B cell (primary cell): ENCODE measurements at regions of chr16 and their contacts with region 1.

Region 1: DNA sequence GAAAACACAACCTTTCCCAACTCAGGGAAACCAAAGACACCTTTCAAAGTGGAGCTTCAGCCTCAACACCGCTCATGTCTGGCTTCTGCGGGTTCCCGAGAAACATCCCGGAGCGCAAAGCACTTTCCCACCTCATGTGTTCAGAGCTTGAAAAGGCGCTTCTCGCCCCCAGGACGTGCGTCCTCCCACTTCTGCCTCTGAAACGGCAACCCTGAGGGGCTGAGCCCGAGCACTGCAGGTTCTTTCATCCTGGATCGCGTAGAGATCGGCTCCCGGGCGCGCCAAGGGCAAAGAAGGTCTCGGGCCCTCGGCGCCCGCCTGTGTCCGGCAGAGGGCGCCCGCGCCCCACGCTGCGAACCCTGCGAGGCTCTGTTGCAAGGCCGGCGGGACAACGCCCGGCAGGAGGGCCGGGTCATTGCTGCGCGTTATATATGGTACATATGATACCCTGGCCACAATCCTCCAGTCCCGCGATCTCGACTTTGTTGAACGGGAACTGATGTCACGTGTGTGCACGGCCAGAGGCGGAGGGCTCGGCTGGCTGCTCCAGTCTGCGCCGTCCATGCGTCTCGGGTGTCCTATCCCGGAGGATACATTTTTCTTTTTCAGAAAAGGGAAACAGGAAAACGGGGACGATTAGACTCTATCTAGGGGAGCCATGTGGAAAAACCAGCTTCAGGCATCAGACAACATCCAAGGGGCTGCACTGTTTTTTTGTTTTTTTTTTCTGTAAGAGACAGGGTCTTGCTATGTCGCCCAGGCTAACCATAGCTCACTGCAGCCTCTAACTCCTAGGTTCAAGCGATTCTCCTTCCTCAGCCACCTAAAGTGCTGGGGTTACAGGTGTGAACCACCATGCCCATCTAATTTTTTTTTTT is 19.1 kb downstream of the COQ7 start:
- DNase-seq: peak; percentile 87
- ATAC-seq: peak; percentile 97
- H3K4me3 ChIP-seq: peak overlapping the region in 4 of 5 experiments; percentile 21 to 58 (median 38)
- H3K4me3 Mint-ChIP-seq: peak overlapping the region; percentile 79
- H3K27ac ChIP-seq: no peak overlapping the region
- H3K27ac Mint-ChIP-seq: no peak overlapping the region
- H3K4me1 ChIP-seq: peaks cover 7 to 10% of the 10 kb centered on the region in 2 donors
- H3K4me1 Mint-ChIP-seq: peaks cover 5% of the 10 kb centered on the region
- H3K27me3 ChIP-seq: peaks cover 0 to 13% (median 8%) of the 10 kb centered on the region in 4 experiments
- H3K27me3 Mint-ChIP-seq: peaks cover 4% of the 10 kb centered on the region
- CTCF ChIP-seq: peak; percentile 100

Region 2: DNA sequence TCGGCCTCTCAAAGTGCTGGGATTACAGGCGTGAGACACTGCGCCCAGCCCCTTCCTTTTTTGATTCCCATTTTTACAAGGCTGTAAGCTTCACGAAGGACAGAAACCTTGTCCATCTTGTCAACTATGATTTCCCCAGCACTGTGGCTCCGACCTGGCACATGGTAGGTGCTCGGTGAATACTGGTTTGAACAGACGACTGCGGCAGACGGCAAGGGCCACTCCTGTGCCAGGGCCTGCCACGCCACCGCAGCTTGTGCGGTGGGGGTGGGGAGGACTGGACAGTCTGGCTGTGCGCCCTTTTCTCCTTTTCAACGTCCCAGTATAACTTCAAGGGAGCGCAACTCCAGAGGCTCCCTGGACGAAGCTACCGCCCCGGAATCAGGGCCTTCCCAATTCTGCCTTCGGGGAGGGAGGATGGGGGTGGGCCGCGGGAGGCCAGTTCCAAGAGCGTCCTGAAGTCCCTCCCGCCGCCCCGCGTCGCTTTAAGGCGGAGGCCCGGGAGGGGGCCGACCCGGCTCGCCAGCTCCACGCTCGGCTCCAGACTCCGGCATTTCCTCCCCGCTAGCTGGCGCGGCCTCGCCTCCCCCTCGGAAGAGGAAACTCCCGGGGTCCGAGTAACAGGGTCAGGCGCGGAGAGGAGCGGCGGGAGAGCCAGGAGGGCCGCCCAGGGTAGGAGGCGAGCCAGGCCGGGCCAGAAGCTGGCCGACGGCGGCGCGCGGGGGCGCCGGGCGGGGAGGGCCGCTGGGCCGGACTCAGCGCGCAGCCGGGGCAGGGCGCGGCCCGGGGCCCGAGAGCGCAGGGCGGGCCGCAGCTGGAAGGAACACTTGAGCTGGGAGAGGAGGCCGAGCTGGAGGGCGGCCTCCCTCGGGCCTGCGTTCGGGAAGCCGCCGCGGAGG is 27.1 kb after region 1 on chr16 and contains the start of gene ITPRIPL2:
- CTCF ChIA-PET with region 1: interaction called, 15 read pairs
- POLR2A ChIA-PET with region 1: no interaction called
- intact Hi-C with region 1: no loop called
- DNase-seq: peak; percentile 54
- ATAC-seq: peak; percentile 41
- H3K4me3 ChIP-seq: peak within 1 kb of the TSS in 4 of 5 experiments; percentile 28 to 53 (median 43)
- H3K4me3 Mint-ChIP-seq: peak within 1 kb of the TSS; percentile 86
- H3K27ac ChIP-seq: no peak within 1 kb of the TSS
- H3K27ac Mint-ChIP-seq: peak within 1 kb of the TSS; percentile 84
- H3K4me1 ChIP-seq: peaks cover 20 to 30% of the 10 kb centered on the region in 2 donors
- H3K4me1 Mint-ChIP-seq: peaks cover 38% of the 10 kb centered on the region
- H3K27me3 ChIP-seq: peaks cover 0 to 12% (median 0%) of the 10 kb centered on the region in 4 experiments
- H3K27me3 Mint-ChIP-seq: peaks cover 13% of the 10 kb centered on the region
- CTCF ChIP-seq: no peak
- total RNA-seq, gene ITPRIPL2: 14.6 and 15.4 TPM in 2 replicates

Region 3: GRCh38 chr16:19167710-19168370 is 81.3 kb after region 1 on chr16 and contains the start of gene SYT17:
- CTCF ChIA-PET with region 1: interaction called, 4 read pairs
- POLR2A ChIA-PET with region 1: no interaction called
- intact Hi-C with region 1: loop called (anchors 1 kb)
- DNase-seq: peak; percentile 85
- ATAC-seq: peak; percentile 88
- H3K4me3 ChIP-seq: peak within 1 kb of the TSS in 4 of 5 experiments; percentile 50 to 69 (median 59)
- H3K4me3 Mint-ChIP-seq: peak within 1 kb of the TSS; percentile 85
- H3K27ac ChIP-seq: peak within 1 kb of the TSS in 1 of 2 donors; percentile 3
- H3K27ac Mint-ChIP-seq: peak within 1 kb of the TSS; percentile 81
- H3K4me1 ChIP-seq: peaks cover 11 to 28% of the 10 kb centered on the region in 2 donors
- H3K4me1 Mint-ChIP-seq: peaks cover 30% of the 10 kb centered on the region
- H3K27me3 ChIP-seq: peaks cover 0 to 16% (median 0%) of the 10 kb centered on the region in 4 experiments
- H3K27me3 Mint-ChIP-seq: peaks cover 11% of the 10 kb centered on the region
- CTCF ChIP-seq: peak; percentile 82
- total RNA-seq, gene SYT17: 25.1 and 27.7 TPM in 2 replicates

Region 4: DNA sequence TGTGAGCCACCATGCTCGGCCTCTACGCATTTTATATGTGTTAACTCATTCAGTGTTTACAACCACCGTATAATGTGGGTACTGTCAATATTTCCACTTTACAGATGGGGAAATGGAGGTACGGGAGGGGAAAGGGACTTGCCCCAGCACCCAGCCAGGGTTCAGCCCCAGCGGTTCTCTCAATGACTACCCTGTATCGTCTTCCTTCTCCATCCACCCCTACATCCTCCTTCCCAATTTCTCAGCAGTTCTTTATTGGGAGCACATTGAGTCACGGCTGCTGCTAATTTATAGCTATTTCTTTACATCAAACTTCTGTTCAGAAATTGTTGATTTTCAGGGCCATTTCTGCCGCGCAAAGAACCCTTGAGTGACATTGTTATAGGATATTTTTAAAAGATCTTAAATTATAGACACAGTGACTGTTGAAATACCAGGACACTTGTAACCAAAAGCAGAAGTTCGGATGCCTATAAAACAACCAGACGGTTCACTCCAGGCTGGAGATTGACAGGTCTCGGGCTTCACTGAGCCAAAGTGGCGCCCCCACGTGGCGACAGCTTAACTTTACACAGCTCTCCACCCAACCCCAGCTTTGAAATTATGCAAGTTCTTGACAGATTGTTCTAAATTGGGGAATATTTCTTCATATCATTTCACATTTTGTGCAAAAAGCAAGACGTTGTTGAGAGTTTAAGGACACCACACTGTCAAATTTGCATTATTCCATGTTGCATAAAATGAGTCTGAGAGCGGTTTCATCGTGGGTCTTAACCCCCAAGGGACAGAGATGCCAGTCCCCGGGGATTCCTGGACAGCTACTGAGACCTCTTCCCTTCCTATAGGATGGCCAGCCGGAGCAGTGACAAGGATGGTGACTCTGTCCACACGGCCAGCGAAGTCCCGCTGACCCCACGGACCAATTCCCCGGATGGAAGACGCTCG is 93.3 kb after region 1 on chr16:
- CTCF ChIA-PET with region 1: interaction called, 31 read pairs
- POLR2A ChIA-PET with region 1: no interaction called
- intact Hi-C with region 1: loop called (anchors 2 kb)
- DNase-seq: peak; percentile 69
- ATAC-seq: peak; percentile 66
- H3K4me3 ChIP-seq: no peak overlapping the region
- H3K4me3 Mint-ChIP-seq: no peak overlapping the region
- H3K27ac ChIP-seq: no peak overlapping the region
- H3K27ac Mint-ChIP-seq: no peak overlapping the region
- H3K4me1 ChIP-seq: peaks cover 0 to 9% of the 10 kb centered on the region in 2 donors
- H3K4me1 Mint-ChIP-seq: peaks cover 9% of the 10 kb centered on the region
- H3K27me3 ChIP-seq: no peaks in the 10 kb centered on the region
- H3K27me3 Mint-ChIP-seq: no peaks in the 10 kb centered on the region
- CTCF ChIP-seq: peak; percentile 78

Region 5: DNA sequence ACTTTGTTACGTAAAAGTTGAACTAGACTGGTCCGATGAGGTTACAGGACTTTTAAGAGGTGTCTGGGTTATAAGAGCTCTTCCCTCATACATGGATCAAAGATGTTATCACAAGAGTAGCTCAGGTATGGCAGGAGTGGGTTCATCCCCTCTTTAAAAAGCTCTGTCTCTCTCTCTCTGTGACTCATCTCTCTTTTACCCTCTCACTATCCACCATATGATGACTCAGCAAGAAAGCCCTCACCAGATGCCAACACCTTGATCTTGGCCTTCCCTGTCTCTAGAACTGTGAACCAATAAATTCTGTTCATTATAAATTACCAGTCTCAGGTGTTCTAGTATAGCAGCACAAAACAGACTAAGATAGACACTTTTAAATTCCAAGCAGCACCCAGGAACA is 197.1 kb after region 1 on chr16:
- CTCF ChIA-PET with region 1: no interaction called
- POLR2A ChIA-PET with region 1: no interaction called
- intact Hi-C with region 1: no loop called
- DNase-seq: no peak
- ATAC-seq: no peak
- H3K4me3 ChIP-seq: no peak overlapping the region
- H3K4me3 Mint-ChIP-seq: no peak overlapping the region
- H3K27ac ChIP-seq: no peak overlapping the region
- H3K27ac Mint-ChIP-seq: no peak overlapping the region
- H3K4me1 ChIP-seq: no peaks in the 10 kb centered on the region
- H3K4me1 Mint-ChIP-seq: no peaks in the 10 kb centered on the region
- H3K27me3 ChIP-seq: no peaks in the 10 kb centered on the region
- H3K27me3 Mint-ChIP-seq: no peaks in the 10 kb centered on the region
- CTCF ChIP-seq: no peak

Region 6: GRCh38 chr16:19375561-19376158 is 289.1 kb after region 1 on chr16:
- CTCF ChIA-PET with region 1: interaction called, 122 read pairs
- POLR2A ChIA-PET with region 1: no interaction called
- intact Hi-C with region 1: no loop called
- DNase-seq: peak; percentile 77
- ATAC-seq: peak; percentile 76
- H3K4me3 ChIP-seq: no peak overlapping the region
- H3K4me3 Mint-ChIP-seq: no peak overlapping the region
- H3K27ac ChIP-seq: no peak overlapping the region
- H3K27ac Mint-ChIP-seq: no peak overlapping the region
- H3K4me1 ChIP-seq: no peaks in the 10 kb centered on the region
- H3K4me1 Mint-ChIP-seq: no peaks in the 10 kb centered on the region
- H3K27me3 ChIP-seq: no peaks in the 10 kb centered on the region
- H3K27me3 Mint-ChIP-seq: no peaks in the 10 kb centered on the region
- CTCF ChIP-seq: peak; percentile 96

Region 7: DNA sequence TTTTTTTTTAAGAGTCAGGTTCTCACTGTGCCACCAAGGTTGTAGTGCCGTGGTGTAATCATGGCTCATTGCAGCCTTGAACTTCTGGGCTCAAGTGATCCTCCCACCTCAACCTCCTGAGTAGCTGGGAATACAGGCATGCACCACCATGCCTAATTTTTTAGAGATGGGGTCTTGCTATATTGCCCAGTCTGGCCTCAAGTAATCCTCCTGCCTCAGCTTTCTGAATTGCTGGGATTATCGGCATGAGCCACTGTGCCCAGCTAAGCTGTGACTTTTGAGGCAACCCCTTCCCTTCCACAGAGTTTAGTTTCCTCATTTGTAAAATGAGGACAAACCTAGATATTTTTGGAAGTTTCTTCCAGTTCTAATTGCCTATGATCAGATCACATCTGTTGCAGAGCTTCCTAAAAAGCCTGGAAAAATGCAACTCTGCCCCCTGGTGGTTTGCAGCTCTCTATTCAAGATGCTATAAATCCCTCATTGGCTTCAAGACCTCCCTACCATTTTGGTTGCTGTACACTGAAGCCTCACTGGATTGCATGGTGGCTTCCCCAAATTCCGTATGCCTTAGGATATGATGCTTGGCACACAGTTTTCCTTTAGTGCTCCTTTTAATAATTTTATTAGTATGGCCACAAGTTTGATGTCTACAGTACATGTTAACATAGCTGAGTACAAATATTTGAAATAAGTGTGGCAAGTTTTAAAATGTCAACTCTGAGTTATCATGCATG is 416.0 kb after region 1 on chr16:
- CTCF ChIA-PET with region 1: interaction called, 83 read pairs
- POLR2A ChIA-PET with region 1: no interaction called
- intact Hi-C with region 1: no loop called
- DNase-seq: peak; percentile 76
- ATAC-seq: no peak
- H3K4me3 ChIP-seq: no peak overlapping the region
- H3K4me3 Mint-ChIP-seq: no peak overlapping the region
- H3K27ac ChIP-seq: no peak overlapping the region
- H3K27ac Mint-ChIP-seq: no peak overlapping the region
- H3K4me1 ChIP-seq: no peaks in the 10 kb centered on the region
- H3K4me1 Mint-ChIP-seq: no peaks in the 10 kb centered on the region
- H3K27me3 ChIP-seq: no peaks in the 10 kb centered on the region
- H3K27me3 Mint-ChIP-seq: no peaks in the 10 kb centered on the region
- CTCF ChIP-seq: peak; percentile 83